ENCODE measurements at regions of chr17 and their contacts with region 1.

Region 1: DNA sequence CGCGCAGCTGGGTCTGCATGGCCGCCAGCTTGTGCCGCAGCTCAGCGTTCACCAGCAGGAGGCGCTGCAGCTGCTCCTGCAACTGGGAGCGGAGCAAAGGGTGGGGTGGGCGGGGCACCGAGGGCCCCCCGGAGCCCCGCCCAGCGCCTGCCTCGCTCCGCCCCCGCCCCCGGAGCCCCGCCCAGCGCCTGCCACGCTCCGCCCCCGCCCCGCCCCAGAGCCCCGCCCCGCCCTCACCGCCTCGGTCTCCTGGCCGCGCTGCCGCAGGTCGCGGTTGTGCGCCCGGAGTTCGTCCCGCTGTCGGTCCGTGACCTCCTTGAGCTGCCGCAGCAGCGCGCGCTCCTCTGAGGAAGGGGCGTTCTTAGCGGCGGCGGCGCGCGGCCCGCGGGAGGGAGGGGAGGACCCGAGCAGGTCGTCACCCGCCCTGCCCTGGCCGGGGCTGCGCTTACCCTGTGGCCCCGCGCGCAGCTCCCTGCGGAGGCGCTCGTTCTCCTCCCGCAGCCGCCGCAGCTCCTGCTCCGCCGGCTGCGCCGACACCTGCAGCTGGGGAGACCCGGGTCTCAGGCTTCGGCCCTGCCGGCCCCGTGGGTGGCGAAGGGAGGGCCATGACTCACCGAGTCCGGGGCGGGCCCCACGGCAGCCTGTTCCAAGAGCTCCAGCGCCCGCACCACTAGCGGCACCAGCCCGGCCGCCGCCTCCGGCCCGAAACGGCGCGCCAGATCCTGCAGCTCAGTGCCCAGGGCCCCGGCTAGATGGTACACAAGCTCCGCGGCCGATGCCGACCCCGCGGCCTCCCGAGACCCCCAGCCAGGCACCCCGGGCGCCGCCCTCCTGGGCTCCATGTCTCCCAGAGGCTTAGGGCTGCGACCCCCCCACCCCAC is 463 bp downstream of the RILP start:
- DNase-seq: peak; percentile 94 to 97
- H3K4me3 ChIP-seq: peak overlapping the region; percentile 75 to 78
- H3K27ac ChIP-seq: peak overlapping the region; percentile 95 to 96
- H3K4me1 ChIP-seq: peaks cover 0 to 38% (median 27%) of the 10 kb centered on the region in 4 donors
- H3K27me3 ChIP-seq: no peaks in the 10 kb centered on the region
- CTCF ChIP-seq: peak; percentile 18 to 92

Region 2: GRCh38 chr17:1267471-1267947 is 381.7 kb before region 1 on chr17:
- intact Hi-C with region 1: loop called (anchors 10 kb)
- DNase-seq: peak; percentile 55 to 80
- H3K4me3 ChIP-seq: peak overlapping the region; percentile 72 to 80
- H3K27ac ChIP-seq: peak overlapping the region; percentile 94 to 95
- H3K4me1 ChIP-seq: peaks cover 0 to 31% (median 15%) of the 10 kb centered on the region in 4 donors
- H3K27me3 ChIP-seq: peaks cover 2 to 31% of the 10 kb centered on the region in 2 donors
- CTCF ChIP-seq: no peak

Region 3: GRCh38 chr17:1573916-1574696 is 75.1 kb before region 1 on chr17:
- intact Hi-C with region 1: loop called (anchors 5 kb)
- DNase-seq: peak; percentile 84 to 91
- H3K4me3 ChIP-seq: no peak overlapping the region
- H3K27ac ChIP-seq: peak overlapping the region; percentile 34 to 65
- H3K4me1 ChIP-seq: peaks cover 0 to 41% (median 28%) of the 10 kb centered on the region in 4 donors
- H3K27me3 ChIP-seq: peaks cover 0 to 16% of the 10 kb centered on the region in 2 donors
- CTCF ChIP-seq: peak; percentile 97 to 99

Region 4: DNA sequence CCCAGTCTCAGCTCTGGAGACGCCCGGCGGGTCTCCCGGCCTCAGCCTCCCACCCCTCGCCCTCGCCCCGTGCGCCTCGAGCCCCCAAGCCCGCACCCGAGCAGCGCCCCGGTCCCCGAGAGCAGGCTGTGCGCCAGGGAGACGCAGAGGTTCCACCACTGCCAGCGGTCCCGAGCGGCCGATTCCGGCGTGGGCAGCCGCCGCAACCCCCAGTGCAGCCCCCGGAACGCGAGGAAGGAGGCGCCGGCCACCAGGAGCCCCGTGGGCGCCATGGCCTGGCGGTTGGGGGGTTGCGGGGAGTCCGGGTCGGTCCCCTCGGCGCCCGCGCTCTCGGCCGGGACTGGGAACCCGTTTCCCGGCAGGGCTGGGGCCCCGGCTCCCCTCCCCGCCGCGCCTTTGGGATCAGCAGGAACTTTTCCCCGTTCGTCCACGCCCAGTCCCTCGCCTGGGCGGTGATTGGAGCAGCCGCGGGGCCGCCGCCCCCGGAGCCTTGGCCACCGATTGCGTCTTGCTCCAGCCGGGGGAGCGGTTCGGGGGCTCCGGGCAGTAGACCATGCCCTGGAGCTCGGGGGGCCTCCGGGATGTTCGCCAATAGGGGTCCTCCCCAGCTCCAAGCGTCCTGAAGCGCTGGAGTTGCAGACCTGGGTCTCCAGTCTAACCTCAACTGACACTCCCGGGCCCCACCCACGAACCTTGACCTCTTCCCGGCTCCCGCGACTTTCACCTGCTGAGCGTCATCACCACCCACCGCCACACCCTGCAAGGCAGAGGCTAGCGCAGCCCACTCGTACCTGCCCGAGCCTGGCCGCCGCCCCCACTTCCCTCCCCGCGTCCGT is 61.0 kb after region 1 on chr17 and contains the start of gene TLCD2:
- intact Hi-C with region 1: loop called (anchors 10 kb)
- DNase-seq: peak; percentile 75 to 89
- H3K4me3 ChIP-seq: peak within 1 kb of the TSS; percentile 66 to 97
- H3K27ac ChIP-seq: peak within 1 kb of the TSS; percentile 86 to 98
- H3K4me1 ChIP-seq: peaks cover 0 to 51% (median 47%) of the 10 kb centered on the region in 4 donors
- H3K27me3 ChIP-seq: no peaks in the 10 kb centered on the region
- CTCF ChIP-seq: no peak

Region 5: DNA sequence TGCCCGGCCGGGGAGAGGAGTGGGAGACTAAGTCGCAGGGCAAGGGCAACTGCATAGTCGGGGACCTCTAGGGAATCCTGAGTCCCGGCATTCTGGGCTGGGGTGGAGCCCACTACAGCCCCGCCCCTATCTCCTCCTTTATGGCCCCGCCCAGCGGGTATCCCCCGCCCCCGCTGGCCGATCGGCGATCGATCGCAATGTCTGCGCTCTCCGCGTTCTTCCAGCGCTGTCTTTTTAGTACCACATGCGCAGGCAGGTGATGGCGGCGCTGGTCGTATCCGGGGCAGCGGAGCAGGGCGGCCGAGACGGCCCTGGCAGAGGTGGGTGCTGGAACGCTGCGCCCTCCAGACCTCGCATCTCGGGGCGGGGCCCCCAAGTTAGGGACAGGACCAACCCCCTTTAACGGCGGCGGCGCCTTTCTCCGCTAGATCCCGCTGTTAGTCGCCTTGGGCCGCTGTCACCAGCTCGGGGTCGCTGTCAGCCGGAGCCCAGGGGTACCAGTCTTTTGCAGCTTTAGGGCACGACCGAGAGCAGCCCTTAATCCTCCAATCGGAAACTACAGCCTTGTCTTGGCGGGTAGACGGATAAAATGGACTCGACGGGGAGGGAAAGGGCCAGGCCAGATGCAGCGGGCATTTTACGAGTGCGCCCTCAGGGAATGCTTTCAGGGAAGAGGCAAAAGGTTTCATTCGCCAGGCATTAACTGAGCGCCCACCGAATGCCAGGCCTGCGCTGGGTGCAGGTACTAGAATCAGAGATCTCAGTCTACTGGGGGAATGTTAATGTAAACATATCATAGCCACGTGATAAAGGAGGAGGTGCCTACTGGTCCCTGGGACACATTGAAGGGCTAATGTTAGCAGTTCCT is 380.9 kb after region 1 on chr17 and contains the start of gene DPH1:
- intact Hi-C with region 1: loop called (anchors 10 kb)
- DNase-seq: peak; percentile 86 to 92
- H3K4me3 ChIP-seq: peak within 1 kb of the TSS; percentile 87 to 96
- H3K27ac ChIP-seq: peak within 1 kb of the TSS; percentile 72 to 77
- H3K4me1 ChIP-seq: peaks cover 0 to 40% (median 30%) of the 10 kb centered on the region in 4 donors
- H3K27me3 ChIP-seq: peaks cover 0 to 44% of the 10 kb centered on the region in 2 donors
- CTCF ChIP-seq: no peak